ENCODE measurements at regions of chr20 and their contacts with region 1.

Region 1: GRCh38 chr20:354298-355064 is 7.6 kb downstream of the NRSN2 start:
- DNase-seq: peak; percentile 83 to 95
- ATAC-seq: peak; percentile 85 to 95
- H3K4me3 ChIP-seq: no peak overlapping the region
- H3K27ac ChIP-seq: peak overlapping the region; percentile 71 to 81
- H3K4me1 ChIP-seq: peaks cover 13% of the 10 kb centered on the region; the same call in 2 of the 3 replicates
- CTCF ChIP-seq: peak; percentile 99
- EP300 ChIP-seq: no peak
- POLR2A ChIP-seq: no peak
- RAD21 ChIP-seq: peak; percentile 99 to 100

Region 2: GRCh38 chr20:371755-372542 is 17.5 kb after region 1 on chr20:
- CTCF ChIA-PET with region 1: interaction called, 175 read pairs
- POLR2A ChIA-PET with region 1: interaction called, 4 read pairs
- DNase-seq: peak; percentile 84 to 96
- ATAC-seq: peak; percentile 73 to 74
- H3K4me3 ChIP-seq: no peak overlapping the region; the same call in 2 of the 3 replicates
- H3K27ac ChIP-seq: peak overlapping the region; percentile 94 to 98
- H3K4me1 ChIP-seq: peaks cover 81% of the 10 kb centered on the region
- CTCF ChIP-seq: no peak
- EP300 ChIP-seq: peak; percentile 92 to 96; a peak in 3 of 5 replicates
- POLR2A ChIP-seq: no peak
- RAD21 ChIP-seq: peak in 1 of 2 experiments; percentile 58; a peak in 3 of 5 replicates

Region 3: DNA sequence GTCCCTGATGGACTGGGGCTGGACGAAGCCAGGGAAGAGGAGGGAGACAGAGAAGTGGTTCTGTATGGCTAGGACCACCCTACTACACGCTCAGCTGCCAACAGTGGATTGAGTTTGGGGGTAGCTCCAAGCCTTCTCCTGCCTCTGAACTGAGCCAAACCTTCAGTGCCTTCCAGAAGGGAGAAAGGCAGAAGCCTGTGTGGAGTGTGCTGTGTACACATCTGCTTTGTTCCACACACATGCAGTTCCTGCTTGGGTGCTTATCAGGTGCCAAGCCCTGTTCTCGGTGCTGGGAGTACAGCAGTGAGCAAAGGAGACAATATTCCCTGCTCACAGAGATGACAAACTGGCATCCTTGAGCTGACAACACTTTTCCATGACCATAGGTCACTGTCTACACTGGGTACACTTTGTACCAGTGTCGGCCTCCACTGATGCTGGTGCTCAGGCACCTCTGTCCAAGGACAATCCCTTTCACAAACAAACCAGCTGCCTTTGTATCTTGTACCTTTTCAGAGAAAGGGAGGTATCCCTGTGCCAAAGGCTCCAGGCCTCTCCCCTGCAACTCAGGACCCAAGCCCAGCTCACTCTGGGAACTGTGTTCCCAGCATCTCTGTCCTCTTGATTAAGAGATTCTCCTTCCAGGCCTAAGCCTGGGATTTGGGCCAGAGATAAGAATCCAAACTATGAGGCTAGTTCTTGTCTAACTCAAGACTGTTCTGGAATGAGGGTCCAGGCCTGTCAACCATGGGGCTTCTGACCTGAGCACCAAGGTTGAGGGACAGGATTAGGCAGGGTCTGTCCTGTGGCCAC is 42.3 kb after region 1 on chr20:
- CTCF ChIA-PET with region 1: interaction called, 43 read pairs
- POLR2A ChIA-PET with region 1: no interaction called
- DNase-seq: no peak
- ATAC-seq: peak in 1 of 2 experiments; percentile 21; a peak in 5 of 6 replicates
- H3K4me3 ChIP-seq: no peak overlapping the region
- H3K27ac ChIP-seq: peak overlapping the region; percentile 42 to 60; a peak in 3 of 6 replicates
- H3K4me1 ChIP-seq: peaks cover 44% of the 10 kb centered on the region
- CTCF ChIP-seq: no peak
- EP300 ChIP-seq: no peak
- POLR2A ChIP-seq: no peak
- RAD21 ChIP-seq: no peak

Region 4: GRCh38 chr20:414161-414560 is 59.7 kb after region 1 on chr20:
- CTCF ChIA-PET with region 1: interaction called, 15 read pairs
- POLR2A ChIA-PET with region 1: no interaction called
- DNase-seq: no peak
- ATAC-seq: no peak
- H3K4me3 ChIP-seq: no peak overlapping the region
- H3K27ac ChIP-seq: no peak overlapping the region
- H3K4me1 ChIP-seq: peaks cover 33% of the 10 kb centered on the region
- CTCF ChIP-seq: no peak
- EP300 ChIP-seq: no peak
- POLR2A ChIP-seq: no peak
- RAD21 ChIP-seq: no peak

Region 5: GRCh38 chr20:462199-462991 is 107.9 kb after region 1 on chr20 and contains the start of gene TBC1D20:
- CTCF ChIA-PET with region 1: interaction called, 40 read pairs
- POLR2A ChIA-PET with region 1: interaction called, 3 read pairs
- DNase-seq: peak; percentile 89 to 92
- ATAC-seq: peak; percentile 94 to 96
- H3K4me3 ChIP-seq: peak within 1 kb of the TSS; percentile 82
- H3K27ac ChIP-seq: peak within 1 kb of the TSS; percentile 91 to 92
- H3K4me1 ChIP-seq: peaks cover 25% of the 10 kb centered on the region
- CTCF ChIP-seq: peak; percentile 58
- EP300 ChIP-seq: no peak
- POLR2A ChIP-seq: peak; percentile 94
- RAD21 ChIP-seq: peak in 1 of 2 experiments; percentile 29; a peak in 1 of 5 replicates
- polyA plus RNA-seq, gene TBC1D20: 43.4 and 53.9 TPM in 2 replicates

Region 6: DNA sequence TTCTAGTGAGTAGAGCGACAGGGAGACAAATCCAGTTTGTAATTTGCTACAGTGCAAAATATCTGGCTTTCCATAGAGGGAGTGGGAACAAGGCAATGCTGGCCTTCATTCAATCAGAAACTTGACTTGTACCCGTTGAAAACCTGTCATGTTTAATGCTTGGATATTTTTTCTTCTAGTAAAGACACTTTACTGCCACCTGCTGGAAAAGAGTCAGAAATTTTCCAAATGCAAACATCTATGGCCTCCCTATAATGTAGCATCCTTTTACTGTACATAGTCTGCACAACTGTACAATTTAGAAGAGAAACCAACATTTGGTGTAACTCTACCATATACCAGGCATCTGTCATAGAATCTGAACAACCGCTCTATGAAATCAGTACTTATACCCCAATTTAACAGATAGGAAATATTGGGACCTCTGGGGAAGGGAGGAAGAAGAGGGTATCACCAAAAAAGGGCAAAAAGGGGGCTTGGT is 124.5 kb after region 1 on chr20:
- CTCF ChIA-PET with region 1: interaction called, 71 read pairs
- POLR2A ChIA-PET with region 1: interaction called, 8 read pairs
- DNase-seq: peak; percentile 71 to 76
- ATAC-seq: peak; percentile 73 to 81
- H3K4me3 ChIP-seq: no peak overlapping the region
- H3K27ac ChIP-seq: peak overlapping the region in 1 of 2 experiments; percentile 43; a peak in 2 of 6 replicates
- H3K4me1 ChIP-seq: peaks cover 10% of the 10 kb centered on the region; the same call in 2 of the 3 replicates
- CTCF ChIP-seq: peak; percentile 86
- EP300 ChIP-seq: no peak
- POLR2A ChIP-seq: no peak
- RAD21 ChIP-seq: peak; percentile 70 to 71

Region 7: DNA sequence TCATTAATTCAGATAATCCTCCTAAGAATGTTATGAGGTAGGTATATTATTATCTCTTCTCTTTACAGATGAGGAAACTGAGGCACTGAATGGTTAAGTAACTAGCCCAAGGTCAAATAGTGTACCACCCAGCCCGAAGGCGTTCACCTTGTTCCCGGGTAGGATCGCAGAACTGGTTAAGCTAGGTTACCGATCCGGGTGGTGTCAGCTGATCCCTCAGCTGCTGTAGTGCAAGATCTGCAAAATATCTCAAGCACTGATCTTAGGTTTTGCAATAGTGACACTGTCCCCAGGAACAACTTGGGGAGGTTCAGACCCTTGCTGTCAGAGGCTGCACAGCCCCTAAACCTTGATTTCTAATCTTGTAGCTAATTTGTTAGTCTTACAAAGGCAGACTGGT is 385.7 kb after region 1 on chr20:
- CTCF ChIA-PET with region 1: interaction called, 11 read pairs
- POLR2A ChIA-PET with region 1: no interaction called
- DNase-seq: no peak
- ATAC-seq: no peak
- H3K4me3 ChIP-seq: no peak overlapping the region
- H3K27ac ChIP-seq: no peak overlapping the region
- H3K4me1 ChIP-seq: no peaks in the 10 kb centered on the region
- CTCF ChIP-seq: no peak
- EP300 ChIP-seq: no peak
- POLR2A ChIP-seq: no peak
- RAD21 ChIP-seq: no peak

Measured in A549 (cell line).